GM10248 (cell line): ENCODE measurements at regions of chr11 and their contacts with region 1.

Region 1: DNA sequence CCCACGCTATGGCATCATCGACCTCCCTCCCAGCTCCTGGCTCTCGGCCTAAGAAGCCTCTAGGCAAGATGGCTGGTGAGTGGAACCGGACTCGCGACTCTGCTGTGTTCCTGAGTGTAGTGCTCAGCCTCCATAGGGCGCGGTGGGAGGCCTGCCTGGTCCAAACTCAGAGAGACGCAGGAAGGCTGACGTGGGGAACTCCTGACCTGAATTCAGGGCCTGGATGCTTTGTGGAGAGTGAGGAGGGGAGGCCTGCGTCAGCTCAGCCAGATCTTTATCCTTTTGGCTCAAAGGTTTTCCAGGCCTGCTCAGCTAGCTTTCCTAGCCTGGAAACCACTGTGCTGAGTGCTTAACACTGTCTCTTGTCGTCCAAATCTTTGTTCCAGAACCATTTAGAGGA is 8.0 kb downstream of the TIRAP start:
- DNase-seq: no peak
- CTCF ChIP-seq: no peak

Region 2: GRCh38 chr11:126256216-126256615 is 34.7 kb before region 1 on chr11:
- CTCF ChIA-PET with region 1: no interaction called
- POLR2A ChIA-PET with region 1: no interaction called
- DNase-seq: no peak
- CTCF ChIP-seq: no peak

Region 3: DNA sequence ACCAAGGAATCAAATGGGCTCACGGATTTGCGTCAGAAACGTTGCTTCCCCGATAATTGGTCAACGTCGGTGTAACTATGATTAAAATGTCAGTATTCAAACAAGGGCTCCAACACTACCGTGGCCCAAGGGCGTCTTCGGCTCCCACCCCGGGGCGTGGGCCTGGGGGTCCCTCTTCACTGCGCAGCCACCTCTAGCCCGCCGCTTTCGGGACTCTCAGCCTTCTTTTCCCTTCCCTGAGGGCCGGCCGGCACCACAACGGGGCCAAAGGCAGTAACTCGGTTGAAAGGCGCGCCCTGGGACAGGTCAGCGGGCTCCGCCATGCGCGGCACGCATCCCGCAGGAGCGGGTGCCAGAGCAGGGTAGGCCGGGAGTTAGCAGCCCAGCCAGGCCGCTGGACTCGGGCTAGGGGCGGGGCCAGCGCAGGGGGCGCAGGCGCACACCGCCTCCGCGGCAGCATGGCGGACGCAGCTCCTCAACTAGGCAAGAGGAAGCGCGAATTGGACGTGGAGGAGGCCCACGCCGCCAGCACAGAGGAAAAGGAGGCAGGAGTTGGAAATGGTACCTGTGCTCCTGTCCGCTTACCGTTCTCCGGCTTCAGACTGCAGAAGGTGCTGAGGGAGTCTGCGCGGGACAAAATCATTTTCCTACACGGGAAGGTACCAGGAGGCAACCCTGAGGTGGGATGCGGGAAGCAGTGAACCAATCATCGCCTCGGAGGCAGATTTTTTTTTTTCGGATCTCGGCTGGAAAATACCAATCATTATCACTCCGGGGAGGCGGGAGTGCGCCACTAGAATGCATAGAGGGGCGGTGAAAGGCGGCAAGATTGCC is 13.0 kb after region 1 on chr11 and contains the start of gene DCPS:
- CTCF ChIA-PET with region 1: interaction called, 12 read pairs
- POLR2A ChIA-PET with region 1: interaction called, 3 read pairs
- DNase-seq: peak; percentile 93
- CTCF ChIP-seq: no peak